ENCODE measurements at regions of chr3 and their contacts with region 1.

Region 1: DNA sequence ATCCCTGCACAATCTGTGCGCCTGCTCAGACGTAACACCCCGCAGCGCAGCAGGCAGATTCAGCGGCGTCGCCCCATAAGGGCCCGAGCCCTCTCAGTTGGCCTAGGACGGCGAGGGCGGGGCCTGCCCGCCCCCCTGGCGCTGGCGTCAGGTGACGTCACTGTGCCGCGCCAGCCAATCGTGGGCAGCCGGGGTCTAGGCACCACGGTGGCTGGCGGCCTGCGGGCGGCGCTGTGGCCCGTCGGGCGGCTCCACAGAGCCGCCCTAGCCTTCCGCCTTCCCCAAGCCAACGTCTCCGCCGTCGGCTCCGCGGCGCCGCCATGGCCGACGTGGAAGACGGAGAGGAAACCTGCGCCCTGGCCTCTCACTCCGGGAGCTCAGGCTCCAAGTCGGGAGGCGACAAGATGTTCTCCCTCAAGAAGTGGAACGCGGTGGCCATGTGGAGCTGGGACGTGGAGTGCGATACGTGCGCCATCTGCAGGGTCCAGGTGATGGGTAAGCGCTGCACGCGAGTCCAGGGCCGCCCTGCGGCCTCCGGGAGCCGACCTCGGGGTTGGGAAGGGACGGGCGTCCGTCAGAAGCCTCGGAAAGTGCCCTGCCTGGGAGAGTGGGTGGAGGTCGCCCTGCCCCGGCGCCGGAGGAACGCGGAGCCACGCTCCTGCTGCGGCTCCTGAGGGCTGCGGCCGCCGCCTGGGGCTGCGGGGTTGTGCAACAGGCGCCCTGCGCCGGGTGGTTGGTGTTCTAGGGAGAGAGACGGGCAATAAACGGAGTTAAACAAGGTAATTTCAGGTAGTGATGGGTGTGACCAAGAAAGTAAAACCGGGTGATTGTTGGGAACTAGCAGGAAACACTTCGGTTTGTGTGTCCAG is at the start of gene RNF7:
- DNase-seq: peak; percentile 80 to 96
- ATAC-seq: peak; percentile 94 to 98
- H3K4me3 ChIP-seq: peak within 1 kb of the TSS; percentile 65
- H3K27ac ChIP-seq: peak within 1 kb of the TSS; percentile 87 to 95
- H3K4me1 ChIP-seq: peaks cover 36% of the 10 kb centered on the region
- CTCF ChIP-seq: peak; percentile 97
- EP300 ChIP-seq: no peak
- POLR2A ChIP-seq: peak; percentile 69
- RAD21 ChIP-seq: peak; percentile 48 to 87; a peak in 4 of 5 replicates
- polyA plus RNA-seq, gene RNF7: 84.1 and 93.3 TPM in 2 replicates

Region 2: DNA sequence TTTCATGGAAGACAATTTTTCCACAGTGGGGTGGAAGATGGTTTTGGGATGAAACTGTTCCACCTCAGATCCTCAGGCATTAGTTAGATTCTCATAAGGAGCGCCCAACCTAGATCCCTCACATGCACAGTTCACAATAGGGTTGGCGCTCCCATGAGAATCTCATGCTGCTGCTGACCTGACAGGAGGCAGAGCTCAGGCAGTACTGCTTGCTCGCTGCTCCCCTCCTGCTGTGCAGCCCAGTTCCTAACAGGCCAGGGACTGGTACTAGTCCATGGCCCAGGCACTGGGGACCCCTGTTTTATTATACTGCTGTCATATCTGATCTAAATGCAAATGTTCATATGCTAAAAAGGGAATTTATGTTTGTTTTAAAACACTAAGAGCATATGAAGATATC is 15.1 kb after region 1 on chr3:
- CTCF ChIA-PET with region 1: interaction called, 40 read pairs
- POLR2A ChIA-PET with region 1: interaction called, 4 read pairs
- DNase-seq: no peak
- ATAC-seq: no peak; a peak in 2 of 6 replicates
- H3K4me3 ChIP-seq: no peak overlapping the region
- H3K27ac ChIP-seq: no peak overlapping the region
- H3K4me1 ChIP-seq: no peaks in the 10 kb centered on the region
- CTCF ChIP-seq: no peak
- EP300 ChIP-seq: no peak
- POLR2A ChIP-seq: no peak
- RAD21 ChIP-seq: no peak

Region 3: DNA sequence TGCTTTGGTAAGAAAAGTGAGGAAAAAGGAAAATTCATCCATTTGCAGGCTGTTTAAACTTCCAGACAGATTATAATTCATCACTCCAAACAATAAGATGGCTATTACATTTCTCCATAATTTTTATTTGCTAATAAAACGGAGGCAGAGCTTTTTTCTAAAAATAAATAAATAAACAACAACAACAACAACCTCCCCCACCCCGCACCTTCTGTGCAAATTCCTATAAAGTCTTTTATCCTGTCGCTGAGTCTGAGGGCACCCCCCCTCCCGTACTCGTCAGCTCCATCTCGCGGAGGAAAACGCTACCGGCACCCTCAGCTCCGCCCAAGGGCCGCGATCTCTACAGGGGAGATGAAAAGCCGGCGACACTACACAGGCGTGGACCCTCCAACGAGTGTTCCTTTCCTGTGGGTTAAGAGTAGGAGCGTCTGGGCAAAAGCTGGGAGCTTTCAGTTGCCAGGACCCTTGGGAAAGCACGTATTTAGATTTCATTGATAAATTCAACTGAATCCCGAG is 137.2 kb after region 1 on chr3:
- CTCF ChIA-PET with region 1: interaction called, 24 read pairs
- POLR2A ChIA-PET with region 1: interaction called, 15 read pairs
- DNase-seq: peak; percentile 86 to 89
- ATAC-seq: peak; percentile 72 to 92
- H3K4me3 ChIP-seq: peak overlapping the region; percentile 92
- H3K27ac ChIP-seq: peak overlapping the region; percentile 91 to 95
- H3K4me1 ChIP-seq: peaks cover 19% of the 10 kb centered on the region
- CTCF ChIP-seq: peak; percentile 75
- EP300 ChIP-seq: no peak
- POLR2A ChIP-seq: no peak
- RAD21 ChIP-seq: peak; percentile 61 to 67; a peak in 4 of 5 replicates

Region 4: DNA sequence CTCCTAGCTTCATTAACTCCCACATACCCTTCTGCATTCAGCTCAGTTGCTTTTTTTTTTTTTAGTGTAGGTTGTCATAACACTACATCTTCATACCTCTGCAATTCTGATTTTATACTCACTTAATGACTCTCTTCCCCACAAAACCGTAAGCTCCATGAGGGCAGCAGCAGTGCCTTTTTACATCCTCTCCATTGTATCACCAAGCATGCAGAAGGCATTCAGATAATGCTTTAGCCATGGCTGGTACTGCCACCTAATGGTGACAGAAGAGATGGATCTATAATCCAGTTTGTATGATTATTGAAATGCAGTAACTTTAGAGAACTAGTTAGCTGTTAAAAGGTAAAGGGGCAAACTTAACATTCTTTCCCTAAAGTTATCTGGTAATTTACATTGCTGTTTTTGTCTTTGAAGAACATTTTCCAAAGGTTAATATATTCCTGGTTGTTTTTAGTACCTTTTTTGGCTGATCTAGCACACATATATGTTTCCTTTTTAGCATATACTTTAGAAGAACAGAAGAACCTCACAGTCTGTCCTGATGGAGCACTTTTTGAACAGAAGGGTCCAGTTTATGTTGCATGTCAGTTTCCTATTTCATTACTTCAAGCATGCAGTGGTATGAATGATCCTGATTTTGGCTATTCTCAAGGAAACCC is 175.0 kb after region 1 on chr3:
- CTCF ChIA-PET with region 1: interaction called, 16 read pairs
- POLR2A ChIA-PET with region 1: interaction called, 5 read pairs
- DNase-seq: peak; percentile 64 to 77
- ATAC-seq: peak; percentile 89 to 91
- H3K4me3 ChIP-seq: no peak overlapping the region
- H3K27ac ChIP-seq: no peak overlapping the region
- H3K4me1 ChIP-seq: no peaks in the 10 kb centered on the region
- CTCF ChIP-seq: peak; percentile 70
- EP300 ChIP-seq: no peak
- POLR2A ChIP-seq: no peak
- RAD21 ChIP-seq: peak; percentile 64 to 71